ENCODE measurements at regions of chr20 and their contacts with region 1.

Region 1: GRCh38 chr20:49541733-49542513 is 26.0 kb downstream of the PTGIS start:
- DNase-seq: peak; percentile 87
- H3K4me3 Mint-ChIP-seq: no peak overlapping the region
- H3K27ac Mint-ChIP-seq: peak overlapping the region; percentile 38
- H3K4me1 Mint-ChIP-seq: peaks cover 17% of the 10 kb centered on the region
- H3K27me3 Mint-ChIP-seq: peaks cover 11% of the 10 kb centered on the region

Region 2: DNA sequence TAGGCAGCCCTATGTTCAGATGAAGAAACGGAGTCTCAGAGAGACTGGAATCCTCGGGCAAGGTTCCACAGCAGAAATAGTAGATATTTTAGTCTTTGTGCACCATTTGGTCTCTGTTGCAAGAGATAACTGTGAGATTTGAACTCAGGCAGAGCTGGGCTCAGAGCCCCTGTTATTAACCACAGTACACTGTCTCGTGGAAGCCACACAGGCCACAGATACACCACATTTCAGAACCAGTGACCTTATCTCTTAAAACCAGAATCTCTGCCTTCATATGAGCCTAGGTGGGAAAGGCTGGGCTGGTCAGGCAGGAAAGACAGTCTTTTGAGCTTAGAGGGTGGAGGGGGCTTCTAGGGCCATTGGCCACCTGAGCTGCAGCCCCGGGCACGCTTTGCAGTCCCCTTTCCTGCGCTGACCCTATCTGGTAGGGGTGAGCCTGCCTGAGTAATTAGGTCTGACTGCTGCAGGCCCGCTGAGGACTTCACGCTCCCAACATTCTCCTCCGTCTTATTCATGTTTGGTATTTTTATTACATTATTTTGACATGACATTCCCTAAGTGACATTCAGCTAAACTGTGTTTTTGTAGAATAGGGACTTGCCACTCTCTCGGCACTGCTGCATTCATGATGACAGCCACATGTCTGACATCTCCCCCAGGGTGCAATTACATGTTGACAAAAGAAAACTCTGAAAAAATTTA is 130.6 kb before region 1 on chr20:
- CTCF ChIA-PET with region 1: no interaction called
- POLR2A ChIA-PET with region 1: no interaction called
- intact Hi-C with region 1: no loop called
- DNase-seq: no peak
- H3K4me3 Mint-ChIP-seq: no peak overlapping the region
- H3K27ac Mint-ChIP-seq: no peak overlapping the region
- H3K4me1 Mint-ChIP-seq: no peaks in the 10 kb centered on the region
- H3K27me3 Mint-ChIP-seq: peaks cover 13% of the 10 kb centered on the region

Region 3: GRCh38 chr20:49501917-49502316 is 40.0 kb before region 1 on chr20:
- CTCF ChIA-PET with region 1: no interaction called
- POLR2A ChIA-PET with region 1: no interaction called
- intact Hi-C with region 1: no loop called
- DNase-seq: no peak
- H3K4me3 Mint-ChIP-seq: no peak overlapping the region
- H3K27ac Mint-ChIP-seq: no peak overlapping the region
- H3K4me1 Mint-ChIP-seq: no peaks in the 10 kb centered on the region
- H3K27me3 Mint-ChIP-seq: peaks cover 25% of the 10 kb centered on the region

Region 4: DNA sequence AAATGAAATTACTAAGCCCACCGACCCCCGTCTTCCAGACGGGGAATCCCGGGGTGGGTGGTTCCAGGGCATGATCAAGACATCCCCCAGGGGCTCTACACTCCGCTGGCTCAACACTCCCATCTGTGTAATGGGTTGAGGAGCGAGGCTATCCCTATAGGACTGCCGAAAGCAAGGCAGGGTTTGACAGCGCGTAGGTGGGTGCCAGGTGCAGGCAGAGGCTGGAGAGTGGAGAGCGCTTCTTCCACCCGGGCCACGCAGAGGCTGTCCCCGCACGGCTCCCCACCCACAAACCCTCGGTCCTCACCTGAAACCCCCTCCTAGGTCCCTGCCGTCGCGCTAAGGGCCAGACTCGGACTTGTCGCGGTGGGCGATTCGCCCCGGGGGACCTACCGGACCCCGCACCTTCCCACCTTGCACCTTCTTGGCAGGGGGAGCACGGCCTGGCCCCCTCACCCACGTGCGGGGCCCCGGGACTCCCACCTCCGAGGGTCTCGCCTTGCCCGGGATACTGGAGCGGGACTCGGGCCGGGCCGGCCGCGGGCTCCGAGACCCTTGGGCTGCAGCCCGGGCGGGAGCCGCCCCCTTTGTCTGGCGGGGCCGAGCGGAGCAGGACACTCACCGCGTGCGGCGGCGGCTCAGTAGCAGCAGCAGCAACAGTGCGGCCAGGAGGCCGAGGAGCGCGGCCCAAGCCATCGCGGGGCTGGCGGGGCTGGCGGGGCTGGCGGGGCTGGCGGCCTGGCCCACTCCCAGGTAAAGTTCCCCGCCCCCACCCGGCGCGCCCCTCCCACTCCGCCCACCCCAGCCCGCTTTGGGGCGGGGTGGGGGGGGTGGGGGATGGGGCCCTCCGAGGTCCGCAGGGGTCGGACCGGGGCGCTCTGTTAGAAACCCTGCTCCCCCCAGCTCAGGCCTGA is 25.8 kb after region 1 on chr20 and contains the start of gene PTGIS:
- CTCF ChIA-PET with region 1: interaction called, 22 read pairs
- POLR2A ChIA-PET with region 1: no interaction called
- intact Hi-C with region 1: no loop called
- DNase-seq: peak; percentile 9
- H3K4me3 Mint-ChIP-seq: no peak within 1 kb of the TSS
- H3K27ac Mint-ChIP-seq: no peak within 1 kb of the TSS
- H3K4me1 Mint-ChIP-seq: peaks cover 9% of the 10 kb centered on the region
- H3K27me3 Mint-ChIP-seq: peaks cover 53% of the 10 kb centered on the region
- total RNA-seq, gene PTGIS: 1.8 TPM

Region 5: GRCh38 chr20:49583669-49584417 is 41.9 kb after region 1 on chr20:
- CTCF ChIA-PET with region 1: interaction called, 43 read pairs
- POLR2A ChIA-PET with region 1: no interaction called
- intact Hi-C with region 1: no loop called
- DNase-seq: no peak
- H3K4me3 Mint-ChIP-seq: no peak overlapping the region
- H3K27ac Mint-ChIP-seq: no peak overlapping the region
- H3K4me1 Mint-ChIP-seq: peaks cover 6% of the 10 kb centered on the region
- H3K27me3 Mint-ChIP-seq: peaks cover 3% of the 10 kb centered on the region

Region 6: GRCh38 chr20:49661560-49662329 is 119.8 kb after region 1 on chr20:
- CTCF ChIA-PET with region 1: no interaction called
- POLR2A ChIA-PET with region 1: no interaction called
- intact Hi-C with region 1: no loop called
- DNase-seq: no peak
- H3K4me3 Mint-ChIP-seq: no peak overlapping the region
- H3K27ac Mint-ChIP-seq: no peak overlapping the region
- H3K4me1 Mint-ChIP-seq: peaks cover 26% of the 10 kb centered on the region
- H3K27me3 Mint-ChIP-seq: no peaks in the 10 kb centered on the region

Region 7: GRCh38 chr20:49888345-49888966 is 346.5 kb after region 1 on chr20:
- CTCF ChIA-PET with region 1: interaction called, 16 read pairs
- POLR2A ChIA-PET with region 1: no interaction called
- intact Hi-C with region 1: no loop called
- DNase-seq: peak; percentile 75
- H3K4me3 Mint-ChIP-seq: no peak overlapping the region
- H3K27ac Mint-ChIP-seq: no peak overlapping the region
- H3K4me1 Mint-ChIP-seq: peaks cover 20% of the 10 kb centered on the region
- H3K27me3 Mint-ChIP-seq: no peaks in the 10 kb centered on the region

Region 8: DNA sequence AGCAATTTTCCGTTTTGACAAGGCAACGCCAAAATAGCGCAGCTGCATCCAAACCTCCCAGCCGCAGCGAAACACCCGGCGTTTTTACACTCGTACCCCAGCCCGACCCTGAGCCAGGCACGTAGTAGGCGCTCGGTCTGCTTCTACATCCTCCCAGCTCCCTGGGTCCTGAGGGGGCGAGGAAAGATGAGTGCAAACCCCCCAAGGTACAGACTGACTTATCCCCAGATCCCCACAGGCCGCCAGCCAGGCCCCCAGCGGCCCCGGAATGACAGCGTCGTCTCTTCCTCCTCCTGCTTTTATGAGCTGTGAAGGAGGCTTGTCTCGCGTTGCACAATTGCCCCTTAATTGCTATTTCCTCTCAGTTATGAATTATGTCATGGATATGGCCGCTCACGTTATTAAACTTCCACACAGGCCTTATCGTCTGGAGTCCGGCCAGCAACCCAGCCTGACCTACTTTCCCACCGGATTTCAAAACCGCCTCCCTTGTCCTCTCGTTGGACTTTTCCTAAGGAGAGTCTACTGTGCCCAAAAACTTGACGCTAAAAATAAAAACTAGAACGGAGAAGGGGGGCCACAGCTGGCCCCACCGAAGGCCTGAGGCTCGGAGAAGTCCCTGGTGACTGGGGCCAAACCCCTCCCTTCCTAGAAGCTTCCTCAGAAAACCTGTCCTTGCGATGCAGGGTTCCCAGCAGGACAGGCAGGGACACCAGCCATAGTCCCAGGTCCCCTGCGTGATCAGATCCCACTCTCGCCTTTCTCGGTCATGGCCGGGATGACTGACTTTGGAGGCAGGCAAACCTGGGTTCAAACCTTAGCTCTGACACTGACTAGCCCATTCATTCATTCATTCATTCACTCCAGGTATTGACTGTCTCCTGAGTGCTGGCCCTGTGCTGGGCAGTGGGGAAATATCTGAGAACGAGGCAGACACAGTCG is 837.4 kb after region 1 on chr20:
- CTCF ChIA-PET with region 1: no interaction called
- POLR2A ChIA-PET with region 1: no interaction called
- intact Hi-C with region 1: no loop called
- DNase-seq: no peak
- H3K4me3 Mint-ChIP-seq: no peak overlapping the region
- H3K27ac Mint-ChIP-seq: no peak overlapping the region
- H3K4me1 Mint-ChIP-seq: peaks cover 31% of the 10 kb centered on the region
- H3K27me3 Mint-ChIP-seq: no peaks in the 10 kb centered on the region